CD4-positive, alpha-beta memory T cell (primary cell): ENCODE measurements at regions of chr4 and their contacts with region 1.

Region 1: DNA sequence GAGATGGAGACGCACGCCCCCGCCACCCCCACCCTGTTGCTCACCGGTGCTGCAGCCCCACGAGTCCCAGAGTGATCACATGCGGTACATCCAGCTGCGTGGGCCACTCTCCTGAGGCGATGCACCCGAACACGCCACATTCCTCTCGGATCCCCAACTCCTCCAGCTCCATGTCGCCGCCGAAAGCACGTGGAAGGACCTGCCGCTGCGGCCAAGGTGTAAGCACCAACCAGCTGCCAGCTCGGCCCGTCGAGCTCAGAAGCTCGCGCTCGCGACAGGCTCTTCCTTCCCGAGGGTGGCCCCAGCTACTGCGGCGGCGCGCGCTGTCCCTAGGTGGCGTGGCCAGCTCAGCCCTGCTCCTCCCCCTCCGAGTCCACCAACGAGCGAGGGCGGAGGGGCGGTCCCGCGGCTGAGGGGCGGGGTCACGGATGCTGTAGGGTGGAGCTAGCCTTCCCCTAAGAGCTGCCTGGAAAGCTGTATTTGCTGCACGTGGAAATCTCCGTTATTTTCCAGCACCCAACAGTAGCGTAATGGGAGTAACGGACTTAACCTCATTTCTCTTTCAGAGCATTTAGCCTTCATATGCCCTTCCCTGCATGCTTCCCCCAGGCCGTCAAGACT is at the start of gene PPAT:
- DNase-seq: peak; percentile 98 to 99 (median 99)
- H3K4me3 ChIP-seq: peak within 1 kb of the TSS; percentile 76 to 82
- H3K4me3 Mint-ChIP-seq: peak within 1 kb of the TSS; percentile 90 to 99 (median 94)
- H3K27ac ChIP-seq: peak within 1 kb of the TSS; percentile 61
- H3K27ac Mint-ChIP-seq: peak within 1 kb of the TSS; percentile 87 to 98 (median 96)
- H3K4me1 ChIP-seq: peaks cover 26% of the 10 kb centered on the region
- H3K4me1 Mint-ChIP-seq: peaks cover 24 to 62% (median 39%) of the 10 kb centered on the region in 4 donors
- H3K27me3 ChIP-seq: no peaks in the 10 kb centered on the region
- H3K27me3 Mint-ChIP-seq: peaks cover 0 to 2% of the 10 kb centered on the region in 2 donors
- total RNA-seq, gene PPAT: 15.1 to 15.7 TPM

Region 2: DNA sequence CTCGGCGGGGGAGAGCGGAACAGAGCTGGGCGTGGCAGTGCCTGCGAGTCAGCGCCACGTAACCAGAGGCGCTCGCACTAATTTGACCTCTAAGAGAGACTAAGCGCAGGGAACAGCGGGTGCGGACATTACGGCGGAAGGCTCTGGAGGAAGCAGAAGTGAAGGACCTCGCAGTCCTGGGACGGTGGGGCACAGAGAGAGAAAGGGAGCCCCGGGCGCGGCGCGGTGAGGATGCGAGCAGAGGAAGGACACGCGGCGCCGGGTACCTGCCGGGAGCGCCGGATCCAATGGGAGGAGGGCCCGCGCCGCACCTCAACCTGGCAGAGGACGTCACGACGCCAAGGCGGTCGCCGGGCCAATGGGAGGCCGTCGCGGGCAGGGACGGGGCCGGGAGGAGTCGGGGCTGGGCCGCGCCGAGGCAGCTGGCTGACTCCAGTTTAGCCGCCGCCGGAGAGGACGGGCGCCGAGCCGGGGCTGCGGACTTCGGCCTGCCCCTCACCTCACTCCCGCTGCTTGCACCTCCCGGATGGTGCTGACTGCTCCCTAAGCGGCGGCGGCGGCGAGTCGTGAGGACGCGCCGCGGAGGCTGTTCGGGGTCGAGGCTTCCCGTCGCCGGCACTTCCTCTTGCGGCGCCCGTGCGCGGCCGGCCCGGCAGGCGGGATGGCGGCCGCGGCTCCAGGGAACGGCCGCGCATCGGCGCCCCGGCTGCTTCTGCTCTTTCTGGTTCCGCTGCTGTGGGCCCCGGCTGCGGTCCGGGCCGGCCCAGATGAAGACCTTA is 1039.7 kb before region 1 on chr4 and contains the start of gene TMEM165:
- CTCF ChIA-PET with region 1: no interaction called
- POLR2A ChIA-PET with region 1: interaction called, 4 read pairs
- intact Hi-C with region 1: loop called (anchors 1 kb)
- DNase-seq: peak; percentile 88 to 92 (median 90)
- H3K4me3 ChIP-seq: peak within 1 kb of the TSS; percentile 74 to 75
- H3K4me3 Mint-ChIP-seq: peak within 1 kb of the TSS; percentile 92 to 98 (median 96)
- H3K27ac ChIP-seq: peak within 1 kb of the TSS; percentile 84
- H3K27ac Mint-ChIP-seq: peak within 1 kb of the TSS; percentile 93 to 99 (median 98)
- H3K4me1 ChIP-seq: peaks cover 39% of the 10 kb centered on the region
- H3K4me1 Mint-ChIP-seq: peaks cover 30 to 48% (median 38%) of the 10 kb centered on the region in 4 donors
- H3K27me3 ChIP-seq: no peaks in the 10 kb centered on the region
- H3K27me3 Mint-ChIP-seq: no peaks in the 10 kb centered on the region
- total RNA-seq, gene TMEM165: 61.8 to 74.8 TPM

Region 3: DNA sequence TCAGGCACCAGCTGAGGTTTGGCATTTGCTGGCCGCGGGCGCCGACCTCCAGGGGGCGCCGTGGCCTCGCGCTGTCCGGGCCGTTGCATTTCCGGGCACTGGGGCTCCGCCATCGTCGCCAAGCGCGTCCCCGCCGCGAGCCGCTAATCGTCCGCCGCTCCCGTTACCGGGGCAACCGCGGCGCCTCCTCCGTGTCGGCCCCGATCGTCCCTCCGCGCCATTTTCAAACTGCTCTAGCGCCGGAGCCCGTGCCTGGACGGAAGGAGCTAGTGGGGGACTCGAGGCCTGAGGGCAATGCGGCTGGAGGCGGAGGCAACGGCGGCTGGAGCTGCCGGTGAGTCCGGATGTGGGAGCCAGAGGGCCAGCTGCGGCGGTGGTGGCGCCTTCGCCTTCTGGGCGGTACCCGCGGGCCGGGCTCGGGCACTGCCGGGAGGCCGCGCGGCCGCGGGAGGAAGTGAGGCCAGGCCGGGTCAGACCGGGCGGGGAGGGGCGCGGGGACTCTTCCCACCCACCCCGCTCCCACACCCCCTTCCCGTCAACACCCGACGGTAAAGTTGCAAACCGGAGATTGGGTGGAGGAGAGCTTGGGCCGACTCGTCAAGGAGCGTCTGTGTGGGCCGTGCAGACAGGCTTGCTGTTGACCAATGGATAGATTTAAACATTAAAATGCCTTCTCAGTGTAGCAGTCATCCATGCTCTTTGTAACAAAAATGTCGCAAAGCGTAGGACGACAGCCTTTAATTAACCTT is 486.5 kb before region 1 on chr4 and contains the start of gene CEP135:
- CTCF ChIA-PET with region 1: interaction called, 5 read pairs
- POLR2A ChIA-PET with region 1: interaction called, 23 read pairs
- intact Hi-C with region 1: loop called (anchors 1 kb)
- DNase-seq: peak; percentile 91 to 94 (median 93)
- H3K4me3 ChIP-seq: peak within 1 kb of the TSS; percentile 54 to 65
- H3K4me3 Mint-ChIP-seq: peak within 1 kb of the TSS; percentile 88 to 97 (median 94)
- H3K27ac ChIP-seq: peak within 1 kb of the TSS; percentile 71
- H3K27ac Mint-ChIP-seq: peak within 1 kb of the TSS; percentile 93 to 98 (median 97)
- H3K4me1 ChIP-seq: peaks cover 45% of the 10 kb centered on the region
- H3K4me1 Mint-ChIP-seq: peaks cover 32 to 58% (median 48%) of the 10 kb centered on the region in 4 donors
- H3K27me3 ChIP-seq: no peaks in the 10 kb centered on the region
- H3K27me3 Mint-ChIP-seq: no peaks in the 10 kb centered on the region
- total RNA-seq, gene CEP135: 32.5 to 35.9 TPM

Region 4: GRCh38 chr4:56276547-56276946 is 158.9 kb before region 1 on chr4:
- CTCF ChIA-PET with region 1: no interaction called
- POLR2A ChIA-PET with region 1: no interaction called
- intact Hi-C with region 1: no loop called
- DNase-seq: no peak
- H3K4me3 ChIP-seq: no peak overlapping the region
- H3K4me3 Mint-ChIP-seq: no peak overlapping the region
- H3K27ac ChIP-seq: no peak overlapping the region
- H3K27ac Mint-ChIP-seq: no peak overlapping the region
- H3K4me1 ChIP-seq: no peaks in the 10 kb centered on the region
- H3K4me1 Mint-ChIP-seq: peaks cover 0 to 2% (median 0%) of the 10 kb centered on the region in 4 donors
- H3K27me3 ChIP-seq: no peaks in the 10 kb centered on the region
- H3K27me3 Mint-ChIP-seq: peaks cover 14 to 18% of the 10 kb centered on the region in 2 donors

Region 5: DNA sequence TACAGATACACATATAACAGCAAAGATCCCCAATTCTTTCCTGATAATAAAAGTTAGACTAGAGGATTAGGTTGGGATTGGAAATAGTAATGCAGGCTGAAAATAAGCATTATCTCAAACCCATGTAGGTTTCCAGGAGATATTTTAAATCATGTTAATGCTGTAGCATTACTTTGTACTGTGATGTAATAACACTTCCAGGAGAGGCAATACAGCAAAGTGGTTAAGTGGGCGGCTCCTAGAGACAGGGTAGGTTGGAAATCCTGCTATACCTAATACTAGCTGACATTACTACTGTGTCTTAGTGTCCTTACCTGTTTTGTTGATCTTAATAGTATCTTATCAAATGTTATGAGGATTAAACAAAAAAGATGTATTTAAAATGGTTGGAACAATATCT is 10.3 kb after region 1 on chr4:
- CTCF ChIA-PET with region 1: interaction called, 13 read pairs
- POLR2A ChIA-PET with region 1: interaction called, 17 read pairs
- intact Hi-C with region 1: no loop called
- DNase-seq: no peak
- H3K4me3 ChIP-seq: no peak overlapping the region
- H3K4me3 Mint-ChIP-seq: no peak overlapping the region
- H3K27ac ChIP-seq: no peak overlapping the region
- H3K27ac Mint-ChIP-seq: no peak overlapping the region
- H3K4me1 ChIP-seq: no peaks in the 10 kb centered on the region
- H3K4me1 Mint-ChIP-seq: peaks cover 8 to 20% (median 9%) of the 10 kb centered on the region in 4 donors
- H3K27me3 ChIP-seq: no peaks in the 10 kb centered on the region
- H3K27me3 Mint-ChIP-seq: no peaks in the 10 kb centered on the region

Region 6: GRCh38 chr4:56530269-56531148 is 95.1 kb after region 1 on chr4:
- CTCF ChIA-PET with region 1: interaction called, 8 read pairs
- POLR2A ChIA-PET with region 1: interaction called, 18 read pairs
- intact Hi-C with region 1: loop called (anchors 1 kb)
- DNase-seq: peak; percentile 60 to 80 (median 63)
- H3K4me3 ChIP-seq: peak overlapping the region; percentile 48 to 57
- H3K4me3 Mint-ChIP-seq: no peak overlapping the region
- H3K27ac ChIP-seq: no peak overlapping the region
- H3K27ac Mint-ChIP-seq: peak overlapping the region in 6 of 7 donors; percentile 14 to 69 (median 40)
- H3K4me1 ChIP-seq: peaks cover 11% of the 10 kb centered on the region
- H3K4me1 Mint-ChIP-seq: no peaks in the 10 kb centered on the region
- H3K27me3 ChIP-seq: no peaks in the 10 kb centered on the region
- H3K27me3 Mint-ChIP-seq: peaks cover 7 to 9% of the 10 kb centered on the region in 2 donors

Region 7: DNA sequence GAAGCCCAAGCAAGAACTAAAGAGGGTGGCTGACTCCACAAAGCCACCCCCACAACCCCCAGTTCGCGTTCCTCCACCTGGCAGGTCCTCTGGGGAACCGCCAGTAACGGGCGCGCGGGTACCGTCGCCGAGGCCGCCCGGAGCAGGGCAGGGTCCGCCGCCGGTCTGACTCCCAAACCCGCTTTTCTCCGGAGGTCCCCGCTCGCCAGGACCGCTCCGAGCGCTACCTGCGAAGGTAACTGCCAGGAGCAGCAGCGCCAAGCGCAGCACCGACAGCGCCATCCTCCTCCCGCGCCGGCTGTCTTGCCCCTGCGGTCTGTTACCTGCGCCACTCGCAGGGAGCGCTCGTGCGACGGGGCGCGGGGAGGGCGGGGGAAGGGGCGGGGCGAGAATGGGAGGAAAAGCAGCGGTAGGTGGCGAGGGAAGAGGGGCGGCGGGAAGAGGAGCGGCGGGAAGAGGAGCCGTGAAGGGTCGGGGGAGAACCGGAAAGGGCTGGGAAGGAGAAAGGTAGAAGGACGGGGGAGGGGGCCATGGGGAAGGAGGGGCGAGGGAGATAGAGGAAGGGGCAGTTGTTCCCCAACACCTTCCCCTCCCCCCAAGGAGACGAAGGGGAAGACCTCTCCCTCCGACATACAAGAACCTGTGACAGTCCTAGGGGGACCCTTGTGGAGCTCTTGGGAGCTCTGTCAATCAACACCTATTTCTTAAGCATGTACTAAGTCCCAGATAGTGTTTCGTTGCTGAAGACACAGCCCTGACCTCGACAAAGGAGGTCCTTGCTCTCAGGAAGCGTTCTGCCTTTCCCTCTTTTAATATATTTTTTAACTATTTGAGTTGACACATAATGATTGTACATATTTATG is 386.2 kb after region 1 on chr4 and contains the start of gene SPINK2:
- CTCF ChIA-PET with region 1: no interaction called
- POLR2A ChIA-PET with region 1: no interaction called
- intact Hi-C with region 1: loop called (anchors 5 kb)
- DNase-seq: peak; percentile 62 to 75 (median 67)
- H3K4me3 ChIP-seq: peak within 1 kb of the TSS in 1 of 2 donors; percentile 53
- H3K4me3 Mint-ChIP-seq: peak within 1 kb of the TSS; percentile 76 to 83 (median 82)
- H3K27ac ChIP-seq: no peak within 1 kb of the TSS
- H3K27ac Mint-ChIP-seq: peak within 1 kb of the TSS in 6 of 7 donors; percentile 15 to 72 (median 52)
- H3K4me1 ChIP-seq: peaks cover 27% of the 10 kb centered on the region
- H3K4me1 Mint-ChIP-seq: peaks cover 14 to 35% (median 24%) of the 10 kb centered on the region in 4 donors
- H3K27me3 ChIP-seq: no peaks in the 10 kb centered on the region
- H3K27me3 Mint-ChIP-seq: peaks cover 0 to 2% of the 10 kb centered on the region in 2 donors
- total RNA-seq, gene SPINK2: 3.2 to 3.6 TPM